Naive thymus-derived CD4-positive, alpha-beta T cell (primary cell): ENCODE measurements at regions of chr1 and their contacts with region 1.

Region 1: DNA sequence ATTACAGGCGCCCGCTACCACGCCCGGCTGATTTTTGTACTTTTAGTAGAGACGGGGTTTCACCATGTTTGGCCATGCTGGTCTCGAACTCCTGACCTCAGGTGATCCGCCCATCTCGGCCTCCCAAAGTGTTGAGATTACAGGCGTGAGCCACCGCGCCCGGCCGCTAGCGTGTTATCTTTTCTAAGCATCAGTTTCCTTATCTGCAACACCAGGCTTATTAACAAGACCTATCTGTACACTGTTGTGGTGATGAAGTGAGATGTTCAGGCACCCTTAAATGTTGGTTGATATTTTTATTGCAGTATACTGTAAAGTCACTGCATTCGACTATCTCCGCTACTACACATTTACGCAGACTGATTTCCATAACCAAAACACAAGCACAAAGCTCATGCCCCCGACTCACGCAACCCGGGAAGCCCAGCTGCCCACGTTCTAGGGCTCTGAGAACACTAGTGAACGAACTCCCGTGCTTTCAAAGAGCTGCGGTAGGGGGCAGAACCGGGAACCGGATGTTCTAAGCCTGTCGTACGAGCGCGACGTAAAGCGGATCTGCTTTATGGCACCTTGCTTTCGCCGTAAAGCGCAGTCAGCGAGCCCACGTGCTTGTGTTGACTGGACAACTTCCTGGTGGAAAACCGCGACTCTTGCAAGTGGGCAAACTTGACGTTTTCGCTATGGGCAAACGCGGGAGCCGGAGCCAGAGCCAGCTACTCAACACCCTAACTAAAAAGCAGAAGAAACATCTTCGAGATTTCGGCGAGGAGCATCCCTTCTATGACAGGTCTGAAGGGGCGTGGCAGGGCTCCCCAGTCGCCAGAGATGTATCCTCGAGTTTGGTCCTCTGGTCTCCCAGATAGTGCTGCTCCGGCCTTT is at the start of gene UTP25:
- DNase-seq: peak; percentile 68 to 94 (median 91)
- ATAC-seq: peak; percentile 97
- H3K4me3 ChIP-seq: peak within 1 kb of the TSS; percentile 98
- H3K4me3 Mint-ChIP-seq: peak within 1 kb of the TSS; percentile 77 to 97 (median 92)
- H3K27ac ChIP-seq: peak within 1 kb of the TSS; percentile 84
- H3K27ac Mint-ChIP-seq: peak within 1 kb of the TSS; percentile 74 to 96 (median 89)
- H3K4me1 ChIP-seq: peaks cover 8 to 16% of the 10 kb centered on the region in 2 donors
- H3K4me1 Mint-ChIP-seq: peaks cover 24 to 58% (median 49%) of the 10 kb centered on the region in 7 donors
- H3K27me3 ChIP-seq: no peaks in the 10 kb centered on the region
- H3K27me3 Mint-ChIP-seq: peaks cover 0 to 12% (median 5%) of the 10 kb centered on the region in 5 donors
- total RNA-seq, gene UTP25: 6.0 to 16.3 (median 12.7) TPM

Region 2: GRCh38 chr1:209576798-209577197 is 250.8 kb before region 1 on chr1:
- CTCF ChIA-PET with region 1: interaction called, 3 read pairs
- POLR2A ChIA-PET with region 1: no interaction called
- intact Hi-C with region 1: loop called in 1 of 2 experiments (anchors 5 kb)
- DNase-seq: peak in 8 of 9 donors; percentile 29 to 77 (median 47)
- ATAC-seq: peak; percentile 85
- H3K4me3 ChIP-seq: no peak overlapping the region
- H3K4me3 Mint-ChIP-seq: no peak overlapping the region
- H3K27ac ChIP-seq: no peak overlapping the region
- H3K27ac Mint-ChIP-seq: no peak overlapping the region
- H3K4me1 ChIP-seq: no peaks in the 10 kb centered on the region
- H3K4me1 Mint-ChIP-seq: peaks cover 0 to 6% (median 0%) of the 10 kb centered on the region in 7 donors
- H3K27me3 ChIP-seq: no peaks in the 10 kb centered on the region
- H3K27me3 Mint-ChIP-seq: peaks cover 0 to 35% (median 5%) of the 10 kb centered on the region in 5 donors

Region 3: DNA sequence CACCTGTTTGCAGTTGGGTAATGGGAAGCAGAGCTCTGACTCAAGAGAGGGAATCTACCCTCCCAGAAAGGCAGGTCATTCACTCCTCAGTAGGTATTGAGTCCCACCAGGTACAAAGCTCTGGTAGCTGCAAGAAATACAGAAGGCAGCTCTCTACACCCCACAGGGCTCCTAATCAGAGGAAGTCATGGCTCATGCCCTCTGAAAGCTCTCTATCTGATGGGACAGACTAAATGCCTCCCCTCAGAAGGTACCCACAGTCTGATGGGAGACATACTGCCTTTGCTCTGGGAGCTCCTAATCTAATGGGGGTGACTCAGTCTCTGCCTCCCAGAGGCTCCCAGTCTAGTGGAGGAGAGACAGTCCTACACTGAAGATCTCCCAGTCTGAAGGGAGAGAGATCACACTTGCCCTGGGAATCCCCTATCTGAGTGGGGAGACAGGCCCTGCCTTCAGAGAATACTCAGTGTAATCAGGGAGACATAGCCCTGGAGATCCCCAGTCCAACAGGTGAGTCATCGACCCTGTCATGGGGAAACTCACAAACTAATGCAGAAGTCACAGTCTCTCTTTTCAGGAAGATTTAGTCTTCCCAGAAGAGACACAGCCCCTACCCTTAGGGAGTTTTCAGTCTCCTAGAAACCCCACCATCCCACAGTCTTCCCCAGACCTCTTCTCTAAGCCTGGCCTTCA is 220.4 kb before region 1 on chr1:
- CTCF ChIA-PET with region 1: no interaction called
- POLR2A ChIA-PET with region 1: no interaction called
- intact Hi-C with region 1: no loop called
- DNase-seq: peak in 1 of 9 donors; percentile 56
- ATAC-seq: peak; percentile 71
- H3K4me3 ChIP-seq: no peak overlapping the region
- H3K4me3 Mint-ChIP-seq: no peak overlapping the region
- H3K27ac ChIP-seq: no peak overlapping the region
- H3K27ac Mint-ChIP-seq: peak overlapping the region in 1 of 9 donors; percentile 54
- H3K4me1 ChIP-seq: no peaks in the 10 kb centered on the region
- H3K4me1 Mint-ChIP-seq: peaks cover 0 to 7% (median 0%) of the 10 kb centered on the region in 7 donors
- H3K27me3 ChIP-seq: no peaks in the 10 kb centered on the region
- H3K27me3 Mint-ChIP-seq: no peaks in the 10 kb centered on the region

Region 4: DNA sequence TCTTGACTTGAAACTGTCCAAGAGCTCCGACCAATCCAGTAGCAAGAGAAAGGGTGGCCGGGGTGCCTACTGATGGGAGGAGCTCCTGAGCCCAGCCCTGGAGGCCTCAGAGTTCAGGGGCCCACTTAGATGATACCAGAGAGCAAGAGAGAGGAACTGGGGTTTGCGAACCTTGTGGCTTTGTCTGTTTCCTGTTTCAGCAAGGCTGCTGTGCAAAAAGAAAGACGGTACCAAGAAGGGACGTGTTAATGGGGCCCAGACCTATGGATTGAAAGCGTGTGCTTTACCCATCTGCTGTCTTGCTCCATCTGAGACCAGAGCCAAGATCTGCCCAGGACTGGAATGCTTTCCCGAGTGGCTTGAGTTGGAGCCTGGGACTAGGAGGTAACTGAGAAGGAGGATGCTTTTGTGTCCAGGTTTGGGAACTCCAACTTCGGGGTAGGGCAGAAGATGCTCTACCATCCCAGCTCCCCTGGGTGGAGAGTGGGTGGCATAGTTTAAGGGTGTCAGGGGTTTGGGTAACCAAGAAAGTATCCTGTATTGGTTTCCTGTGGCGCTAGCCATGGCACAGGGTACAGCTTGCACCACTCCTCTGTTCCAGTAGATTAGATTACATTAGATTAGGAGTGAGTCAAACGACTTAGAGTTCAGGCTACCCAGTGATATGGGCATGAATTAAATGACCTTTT is 71.6 kb before region 1 on chr1 and contains the start of gene TRAF3IP3:
- CTCF ChIA-PET with region 1: interaction called, 5 read pairs
- POLR2A ChIA-PET with region 1: interaction called, 8 read pairs
- intact Hi-C with region 1: loop called (anchors 1 to 2 kb)
- DNase-seq: peak; percentile 33 to 86 (median 84)
- ATAC-seq: peak; percentile 97
- H3K4me3 ChIP-seq: peak within 1 kb of the TSS; percentile 91
- H3K4me3 Mint-ChIP-seq: peak within 1 kb of the TSS; percentile 89 to 100 (median 98)
- H3K27ac ChIP-seq: peak within 1 kb of the TSS; percentile 83
- H3K27ac Mint-ChIP-seq: peak within 1 kb of the TSS in 7 of 9 donors; percentile 90 to 99 (median 97)
- H3K4me1 ChIP-seq: peaks cover 63 to 64% of the 10 kb centered on the region in 2 donors
- H3K4me1 Mint-ChIP-seq: peaks cover 68 to 85% (median 78%) of the 10 kb centered on the region in 7 donors
- H3K27me3 ChIP-seq: no peaks in the 10 kb centered on the region
- H3K27me3 Mint-ChIP-seq: no peaks in the 10 kb centered on the region
- total RNA-seq, gene TRAF3IP3: 303 to 746 (median 450) TPM

Region 5: DNA sequence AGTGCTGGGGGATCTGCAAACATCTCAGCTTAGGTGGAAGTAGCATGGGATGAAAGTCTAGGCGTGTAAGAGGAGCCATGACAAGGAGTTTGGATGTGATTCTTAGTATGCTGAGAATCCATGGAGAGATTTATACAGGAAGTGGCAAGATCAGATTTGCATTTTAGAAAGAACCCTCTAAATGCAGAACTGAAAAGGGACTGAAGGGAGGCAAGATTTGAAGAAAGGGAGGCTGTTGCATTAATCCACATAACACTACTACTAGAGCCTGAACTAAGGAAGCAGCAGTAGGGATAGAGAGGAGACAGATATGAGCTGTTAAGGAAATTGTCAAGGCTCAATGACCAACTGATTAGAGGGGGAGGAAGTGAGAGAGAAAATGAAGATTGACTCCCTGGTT is 53.0 kb before region 1 on chr1:
- CTCF ChIA-PET with region 1: interaction called, 5 read pairs
- POLR2A ChIA-PET with region 1: interaction called, 62 read pairs
- intact Hi-C with region 1: loop called in 1 of 2 experiments (anchors 1 kb)
- DNase-seq: no peak
- ATAC-seq: no peak
- H3K4me3 ChIP-seq: no peak overlapping the region
- H3K4me3 Mint-ChIP-seq: peak overlapping the region in 8 of 10 donors; percentile 1 to 53 (median 22)
- H3K27ac ChIP-seq: peak overlapping the region; percentile 65
- H3K27ac Mint-ChIP-seq: peak overlapping the region in 6 of 9 donors; percentile 51 to 92 (median 71)
- H3K4me1 ChIP-seq: peaks cover 37 to 49% of the 10 kb centered on the region in 2 donors
- H3K4me1 Mint-ChIP-seq: peaks cover 14 to 44% (median 25%) of the 10 kb centered on the region in 7 donors
- H3K27me3 ChIP-seq: no peaks in the 10 kb centered on the region
- H3K27me3 Mint-ChIP-seq: no peaks in the 10 kb centered on the region

Region 6: DNA sequence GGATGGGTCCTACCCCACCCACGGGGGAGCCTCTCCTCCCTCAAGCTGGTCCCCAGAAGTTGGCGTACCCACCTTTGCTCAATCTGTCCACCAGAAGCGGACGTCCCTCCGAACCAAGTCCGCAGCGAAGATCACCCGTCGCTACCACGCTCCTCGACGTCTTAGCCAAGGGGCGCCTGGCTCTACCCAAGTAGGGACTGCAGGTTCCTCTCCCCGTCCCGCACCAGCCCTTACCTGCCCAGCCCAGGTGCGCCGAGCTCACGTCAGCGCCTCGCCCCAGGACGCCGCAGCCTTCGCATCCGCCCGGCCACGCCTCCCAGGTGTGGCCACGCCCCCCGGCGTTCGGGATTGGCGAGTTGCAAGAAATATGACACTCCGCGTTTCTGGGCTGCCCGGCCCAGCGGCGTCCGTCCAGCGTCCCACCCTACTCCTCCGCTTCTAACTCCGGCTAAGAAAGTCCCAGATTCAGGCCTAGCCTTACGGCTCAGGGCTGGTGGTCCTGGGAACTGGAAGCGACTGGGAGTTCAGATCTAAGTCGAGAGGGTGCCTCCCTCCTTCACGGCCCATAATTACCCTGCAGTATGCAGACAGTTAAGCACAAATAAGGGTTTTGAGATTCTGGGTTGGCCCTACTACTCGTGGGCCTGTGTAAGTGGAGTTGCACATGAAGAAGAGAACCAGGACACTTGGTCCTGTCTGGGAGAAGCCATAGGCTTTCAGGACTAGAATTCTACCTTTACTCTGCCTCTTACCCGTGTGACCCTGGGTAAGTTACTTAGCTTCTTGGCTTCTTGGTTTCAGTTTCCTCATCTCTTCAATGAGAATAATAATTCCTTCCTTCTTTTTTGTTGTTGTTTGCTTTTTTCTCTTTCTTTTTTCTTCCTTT is 21.5 kb before region 1 on chr1 and contains the start of gene IRF6:
- CTCF ChIA-PET with region 1: interaction called, 6 read pairs
- POLR2A ChIA-PET with region 1: interaction called, 11 read pairs
- intact Hi-C with region 1: loop called (anchors 1 to 2 kb)
- DNase-seq: peak in 8 of 9 donors; percentile 48 to 76 (median 70)
- ATAC-seq: peak; percentile 95
- H3K4me3 ChIP-seq: peak within 1 kb of the TSS; percentile 62
- H3K4me3 Mint-ChIP-seq: peak within 1 kb of the TSS; percentile 59 to 97 (median 90)
- H3K27ac ChIP-seq: peak within 1 kb of the TSS; percentile 14
- H3K27ac Mint-ChIP-seq: peak within 1 kb of the TSS in 8 of 9 donors; percentile 53 to 95 (median 87)
- H3K4me1 ChIP-seq: peaks cover 0 to 6% of the 10 kb centered on the region in 2 donors
- H3K4me1 Mint-ChIP-seq: peaks cover 0 to 12% (median 9%) of the 10 kb centered on the region in 7 donors
- H3K27me3 ChIP-seq: no peaks in the 10 kb centered on the region
- H3K27me3 Mint-ChIP-seq: peaks cover 0 to 16% (median 10%) of the 10 kb centered on the region in 5 donors
- total RNA-seq, gene IRF6: 0.30 to 2.3 (median 0.97) TPM in 4 of 5 experiments, not detected in the other

Region 7: DNA sequence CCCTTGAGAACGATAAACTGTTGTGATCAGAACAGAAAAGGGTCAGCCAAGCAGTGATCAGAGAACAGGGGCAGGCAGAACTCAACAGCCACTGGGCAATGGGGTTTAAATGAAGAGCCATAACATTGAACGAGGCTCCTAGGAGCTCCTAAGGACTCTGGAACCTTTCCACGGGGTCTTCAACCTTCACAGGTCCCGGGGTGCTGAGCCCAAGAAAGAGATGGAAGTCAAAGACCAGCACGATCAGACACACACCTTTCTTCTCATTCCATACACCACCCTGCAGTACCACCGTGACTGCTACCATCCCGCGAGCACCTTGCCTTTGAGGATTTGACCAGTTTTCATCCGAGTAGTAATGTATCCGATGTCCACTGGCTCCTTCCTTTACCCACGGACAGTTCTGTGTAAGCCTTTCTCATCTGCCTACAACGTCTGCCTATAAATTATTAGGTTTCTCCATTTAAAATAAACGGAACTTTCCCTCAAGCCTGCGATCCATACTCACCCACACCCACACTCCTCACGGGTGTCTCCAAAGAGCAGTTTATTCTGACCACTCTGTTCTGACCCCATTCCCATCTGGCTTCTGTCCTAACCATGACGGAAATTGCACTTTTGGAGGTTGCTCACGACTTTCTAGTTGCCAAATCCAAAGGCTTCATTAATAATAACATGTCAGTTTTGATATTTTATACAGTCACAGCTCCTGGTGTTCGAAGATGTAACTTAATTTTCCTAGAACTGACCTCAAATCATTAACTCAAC is 484.3 kb after region 1 on chr1:
- CTCF ChIA-PET with region 1: no interaction called
- POLR2A ChIA-PET with region 1: no interaction called
- intact Hi-C with region 1: loop called in 1 of 2 experiments (anchors 1 kb)
- DNase-seq: no peak
- ATAC-seq: no peak
- H3K4me3 ChIP-seq: peak overlapping the region; percentile 42
- H3K4me3 Mint-ChIP-seq: peak overlapping the region in 9 of 10 donors; percentile 66 to 94 (median 88)
- H3K27ac ChIP-seq: no peak overlapping the region
- H3K27ac Mint-ChIP-seq: peak overlapping the region in 3 of 9 donors; percentile 9 to 43 (median 33)
- H3K4me1 ChIP-seq: no peaks in the 10 kb centered on the region
- H3K4me1 Mint-ChIP-seq: peaks cover 2 to 7% (median 5%) of the 10 kb centered on the region in 7 donors
- H3K27me3 ChIP-seq: no peaks in the 10 kb centered on the region
- H3K27me3 Mint-ChIP-seq: peaks cover 10 to 56% (median 20%) of the 10 kb centered on the region in 5 donors